BJ (cell line): ENCODE measurements at regions of chr3 and their contacts with region 1.

Region 1: DNA sequence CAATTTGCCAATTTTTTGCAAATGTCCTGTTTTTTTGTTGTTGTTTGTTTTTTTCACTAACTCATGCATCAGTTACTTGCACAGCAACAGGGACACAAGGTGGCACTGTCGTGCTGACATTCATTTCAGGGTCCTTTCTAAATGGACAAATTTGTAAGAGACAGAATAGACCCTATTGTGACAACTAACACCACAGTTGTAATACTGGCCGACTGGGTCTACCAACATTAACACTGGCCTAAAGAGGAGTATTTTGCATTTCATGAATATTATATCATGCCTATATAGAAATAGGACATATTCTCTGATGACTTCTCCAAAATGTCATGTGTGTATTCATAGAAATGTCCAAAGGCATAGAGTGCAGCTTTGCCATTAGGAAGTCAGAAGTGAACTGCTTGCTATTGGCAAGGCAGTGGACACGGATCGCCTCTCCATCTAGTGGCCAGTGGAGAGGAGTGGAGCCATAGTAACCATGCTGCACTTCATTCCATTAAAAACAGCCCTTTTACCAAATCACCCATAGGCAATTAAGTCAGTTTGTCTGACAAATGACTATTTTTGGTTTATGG is 54.8 kb downstream of the ZBTB20 start:
- DNase-seq: no peak
- H3K4me3 ChIP-seq: no peak overlapping the region
- H3K27me3 ChIP-seq: no peaks in the 10 kb centered on the region
- CTCF ChIP-seq: peak; percentile 87

Region 2: DNA sequence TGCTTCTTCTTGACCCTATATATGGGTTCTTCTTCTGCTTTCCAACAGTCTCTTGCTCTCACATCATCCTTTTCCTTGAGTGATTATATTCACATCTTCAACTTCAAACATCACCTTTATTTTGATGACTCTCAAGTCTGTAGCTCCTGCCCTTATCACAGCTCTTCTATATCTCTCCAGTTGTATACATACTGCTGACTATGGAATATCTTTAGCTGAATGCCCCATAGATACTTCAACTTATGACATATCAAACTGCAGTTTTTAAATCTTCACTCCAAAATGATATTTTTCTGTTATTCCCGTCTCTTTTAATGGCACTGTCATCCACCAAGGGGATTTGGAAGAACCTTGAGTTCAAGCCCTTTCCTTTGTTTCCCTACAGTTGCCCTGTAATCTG is 84.3 kb before region 1 on chr3:
- CTCF ChIA-PET with region 1: no interaction called
- POLR2A ChIA-PET with region 1: no interaction called
- DNase-seq: no peak
- H3K4me3 ChIP-seq: no peak overlapping the region
- H3K27me3 ChIP-seq: no peaks in the 10 kb centered on the region
- CTCF ChIP-seq: no peak

Region 3: DNA sequence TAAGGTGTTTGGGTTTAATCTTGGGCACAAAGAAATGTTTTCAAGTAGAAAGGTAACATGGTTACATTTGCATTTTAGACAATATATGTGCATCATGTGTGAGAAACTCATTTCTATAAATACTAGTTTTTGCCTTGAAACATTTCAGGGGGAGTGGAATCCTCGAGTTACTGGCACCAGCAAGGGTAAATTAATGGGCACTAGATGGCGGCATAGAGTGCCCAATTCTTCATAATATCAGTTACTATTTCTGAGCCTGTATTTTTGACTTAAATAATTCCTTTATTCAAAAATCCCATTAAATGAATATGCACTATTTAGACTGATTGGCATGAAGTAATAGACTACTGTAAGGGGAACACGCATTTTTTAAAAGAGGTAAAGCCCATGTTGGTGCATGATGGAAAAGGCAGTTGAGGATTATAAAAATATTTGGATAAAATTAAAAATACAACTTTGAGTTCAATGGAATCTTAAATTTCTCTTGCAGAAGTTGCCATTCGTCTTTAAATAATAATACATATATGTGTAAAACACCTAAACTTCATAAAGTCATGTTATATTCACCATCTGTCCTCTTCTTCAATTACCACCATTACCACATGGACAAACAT is 51.5 kb before region 1 on chr3:
- CTCF ChIA-PET with region 1: interaction called, 17 read pairs
- POLR2A ChIA-PET with region 1: no interaction called
- DNase-seq: no peak
- H3K4me3 ChIP-seq: no peak overlapping the region
- H3K27me3 ChIP-seq: no peaks in the 10 kb centered on the region
- CTCF ChIP-seq: peak; percentile 70

Region 4: DNA sequence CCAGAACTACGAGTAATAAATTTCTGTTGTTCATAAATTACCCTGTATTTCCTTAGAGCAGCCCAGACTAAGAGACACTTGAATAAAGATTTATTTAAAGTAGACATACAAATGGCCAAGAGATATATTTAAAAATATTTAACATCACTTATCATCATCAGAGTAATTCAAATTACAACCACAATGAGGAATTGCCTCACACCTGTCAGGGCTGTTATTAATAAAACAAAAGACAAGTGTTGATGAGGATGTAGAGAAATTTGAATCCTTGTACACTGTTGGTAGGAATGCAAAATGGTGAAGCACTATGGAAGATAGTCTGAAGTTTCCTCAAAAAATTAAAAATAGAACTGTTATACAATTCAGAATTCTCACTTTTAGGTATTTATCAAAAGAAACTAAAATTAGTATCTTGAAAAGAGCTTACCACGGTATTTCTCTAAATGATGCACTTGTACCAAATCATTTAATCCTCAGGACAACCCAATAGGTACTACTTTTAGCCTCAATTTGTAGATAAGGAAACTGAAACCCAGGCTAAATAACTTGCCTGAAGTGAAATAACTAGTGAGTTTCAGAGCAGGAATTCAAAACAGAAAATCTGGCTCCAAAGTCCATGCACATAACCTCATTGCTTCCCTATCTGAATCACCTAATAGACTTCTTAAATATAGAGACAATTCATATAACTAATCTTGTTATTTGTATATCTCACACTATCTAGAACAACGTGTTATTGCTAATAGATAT is 14.6 kb before region 1 on chr3:
- CTCF ChIA-PET with region 1: interaction called, 13 read pairs
- POLR2A ChIA-PET with region 1: no interaction called
- DNase-seq: no peak
- H3K4me3 ChIP-seq: no peak overlapping the region
- H3K27me3 ChIP-seq: no peaks in the 10 kb centered on the region
- CTCF ChIP-seq: no peak

Region 5: DNA sequence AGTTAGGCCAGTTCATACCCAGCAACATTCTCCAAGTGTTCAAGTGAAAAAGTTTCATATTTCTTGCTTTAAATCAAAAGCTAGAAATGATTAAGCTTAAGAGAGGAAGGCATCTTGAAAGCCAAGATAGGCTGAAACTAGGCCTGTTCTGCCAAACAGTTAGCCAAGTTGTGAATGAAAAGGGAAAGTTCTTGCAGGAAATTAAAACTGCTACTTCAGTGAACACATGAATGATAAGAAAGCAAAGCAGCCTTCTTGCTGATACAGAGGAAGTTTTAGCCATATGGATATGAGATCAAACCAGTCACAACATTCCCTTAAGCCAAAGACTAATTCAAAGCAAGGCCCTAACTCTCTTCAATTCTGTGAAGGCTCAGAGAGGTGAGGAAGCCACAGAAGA is 1892.0 kb after region 1 on chr3:
- CTCF ChIA-PET with region 1: no interaction called
- POLR2A ChIA-PET with region 1: no interaction called
- DNase-seq: no peak
- H3K4me3 ChIP-seq: no peak overlapping the region
- H3K27me3 ChIP-seq: no peaks in the 10 kb centered on the region
- CTCF ChIP-seq: no peak